ENCODE measurements at regions of chr15 and their contacts with region 1.

Region 1: DNA sequence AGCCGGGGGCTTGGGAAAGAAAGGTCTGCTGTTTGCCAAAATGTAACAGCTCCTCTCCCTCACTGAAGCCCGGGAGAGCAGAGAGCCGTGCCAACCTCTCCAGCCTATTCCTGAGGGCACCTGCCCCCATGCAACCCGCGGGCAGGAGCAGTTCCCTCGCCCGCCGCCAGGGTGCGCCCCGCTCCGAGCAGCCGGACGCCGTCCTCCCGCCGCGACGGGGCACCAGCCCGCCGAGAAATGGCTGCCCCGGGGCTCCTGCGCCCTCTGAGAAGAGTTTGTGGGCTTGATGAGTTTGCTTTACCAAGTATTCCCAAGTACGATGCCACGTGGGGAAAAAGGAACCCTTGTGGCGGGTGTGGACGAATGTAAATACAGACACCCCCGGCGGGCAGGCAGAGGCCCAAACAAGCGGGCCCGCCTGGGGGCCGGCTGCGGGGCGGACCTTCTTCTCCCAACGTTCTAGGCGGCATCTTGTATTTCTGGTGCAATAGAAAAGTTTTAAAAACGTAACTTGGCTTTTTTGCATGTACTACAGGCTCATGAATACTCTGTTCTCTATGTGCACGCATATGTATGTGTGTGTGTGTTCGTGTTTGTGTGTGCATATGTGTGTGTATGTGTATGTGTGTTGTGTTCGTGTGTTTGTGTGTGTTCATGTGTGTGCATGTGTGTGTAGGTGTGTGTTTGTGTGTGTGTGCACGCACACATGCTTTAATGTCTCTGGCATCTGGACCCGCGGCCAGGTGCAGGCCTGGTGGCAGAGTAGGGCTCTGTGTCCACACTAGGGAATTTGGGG is 162.9 kb downstream of the CHSY1 start:
- DNase-seq: peak in 1 of 2 donors; percentile 82
- ATAC-seq: peak; percentile 95

Region 2: GRCh38 chr15:101127506-101128076 is 38.6 kb after region 1 on chr15:
- intact Hi-C with region 1: no loop called
- DNase-seq: peak; percentile 52 to 62
- ATAC-seq: peak; percentile 34

Region 3: DNA sequence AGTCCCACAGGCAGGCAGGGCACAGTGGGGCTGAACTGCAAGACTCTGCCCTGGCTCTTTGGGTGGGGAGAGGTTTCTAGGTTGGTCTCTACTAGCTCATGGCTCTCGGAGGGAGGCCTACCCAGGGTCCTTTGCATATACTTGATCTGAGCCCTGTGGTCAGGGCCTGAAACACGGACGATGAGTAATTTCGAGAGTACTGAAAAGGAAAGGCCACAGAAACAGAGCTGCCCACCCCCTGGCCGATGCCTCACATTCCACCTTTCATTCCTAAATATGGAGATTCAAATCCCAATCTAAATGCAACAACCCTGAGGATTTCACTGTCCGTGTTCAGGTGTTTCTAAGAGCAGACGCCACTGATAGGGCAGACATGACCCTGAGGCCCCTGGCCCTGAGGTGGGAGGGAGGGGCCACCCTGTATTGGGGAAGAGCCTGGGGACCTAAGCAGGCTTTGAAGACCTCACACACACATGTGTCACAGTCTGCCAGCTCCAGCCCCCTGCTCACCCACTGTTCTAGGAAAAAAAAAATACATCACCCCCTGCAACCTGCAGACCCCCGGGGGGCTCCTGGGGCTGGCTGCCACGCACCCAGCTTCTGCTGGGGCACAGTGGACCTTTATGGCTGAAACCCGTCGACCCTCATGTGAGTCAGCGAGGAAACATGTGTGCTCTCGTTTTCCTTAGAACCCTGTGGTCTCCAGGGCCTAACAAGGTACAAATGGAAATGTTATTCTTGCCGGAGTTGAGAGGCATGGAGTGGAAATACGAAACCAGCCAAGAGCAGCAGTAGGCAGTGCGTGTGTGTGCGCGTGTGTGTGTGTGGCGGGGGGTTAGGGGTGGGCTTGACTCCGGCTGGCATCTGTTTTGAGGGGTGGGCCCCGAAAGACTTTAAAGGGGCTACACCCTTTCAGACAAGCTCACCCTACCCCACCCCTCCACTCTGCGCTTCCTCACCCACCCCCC is 50.2 kb after region 1 on chr15:
- intact Hi-C with region 1: no loop called
- DNase-seq: no peak
- ATAC-seq: no peak

Region 4: DNA sequence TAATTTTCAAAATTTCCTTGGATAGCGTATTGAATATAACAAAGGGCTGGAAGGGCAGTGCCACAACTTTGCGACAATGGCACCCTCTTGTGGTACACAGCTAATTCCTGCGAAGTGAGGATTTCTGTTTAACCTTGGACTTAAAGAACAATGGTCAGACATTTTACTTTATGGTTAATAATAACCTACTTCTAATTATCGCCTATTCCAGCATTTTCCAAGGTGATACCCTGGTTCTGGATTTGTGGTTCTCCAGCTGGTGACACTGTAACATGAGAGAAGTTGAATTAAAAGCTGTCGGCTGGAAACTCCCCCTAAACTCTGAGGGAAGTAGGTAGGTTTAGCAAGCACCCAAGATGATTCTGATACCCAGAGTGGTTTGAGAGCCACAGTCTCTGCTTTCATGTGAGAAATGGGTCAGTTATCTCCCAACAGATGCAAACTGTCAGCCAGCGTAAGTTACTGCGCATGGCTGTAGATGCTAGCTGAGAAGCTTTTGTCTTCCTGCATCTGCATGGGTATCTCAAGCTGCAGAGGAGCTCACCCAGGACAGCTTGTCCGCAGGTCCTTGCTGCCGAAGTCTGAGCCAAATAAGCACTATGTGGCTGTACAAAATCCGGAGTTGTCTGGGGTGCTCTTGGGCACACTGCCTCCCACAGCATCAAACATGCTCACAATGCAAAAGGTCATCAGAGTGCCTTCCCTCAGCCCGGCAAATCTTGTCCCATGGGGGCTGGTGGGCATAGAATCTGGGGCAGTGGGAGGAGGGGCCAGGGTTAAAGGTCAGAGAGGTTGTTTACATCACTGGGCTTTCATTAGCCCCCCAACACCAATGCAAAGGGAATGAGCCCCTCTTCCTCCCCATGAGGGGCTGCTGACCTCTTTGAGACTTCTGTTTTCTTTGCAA is 169.5 kb after region 1 on chr15:
- intact Hi-C with region 1: loop called (anchors 5 to 10 kb)
- DNase-seq: peak in 1 of 2 donors; percentile 60
- ATAC-seq: peak; percentile 88

Region 5: DNA sequence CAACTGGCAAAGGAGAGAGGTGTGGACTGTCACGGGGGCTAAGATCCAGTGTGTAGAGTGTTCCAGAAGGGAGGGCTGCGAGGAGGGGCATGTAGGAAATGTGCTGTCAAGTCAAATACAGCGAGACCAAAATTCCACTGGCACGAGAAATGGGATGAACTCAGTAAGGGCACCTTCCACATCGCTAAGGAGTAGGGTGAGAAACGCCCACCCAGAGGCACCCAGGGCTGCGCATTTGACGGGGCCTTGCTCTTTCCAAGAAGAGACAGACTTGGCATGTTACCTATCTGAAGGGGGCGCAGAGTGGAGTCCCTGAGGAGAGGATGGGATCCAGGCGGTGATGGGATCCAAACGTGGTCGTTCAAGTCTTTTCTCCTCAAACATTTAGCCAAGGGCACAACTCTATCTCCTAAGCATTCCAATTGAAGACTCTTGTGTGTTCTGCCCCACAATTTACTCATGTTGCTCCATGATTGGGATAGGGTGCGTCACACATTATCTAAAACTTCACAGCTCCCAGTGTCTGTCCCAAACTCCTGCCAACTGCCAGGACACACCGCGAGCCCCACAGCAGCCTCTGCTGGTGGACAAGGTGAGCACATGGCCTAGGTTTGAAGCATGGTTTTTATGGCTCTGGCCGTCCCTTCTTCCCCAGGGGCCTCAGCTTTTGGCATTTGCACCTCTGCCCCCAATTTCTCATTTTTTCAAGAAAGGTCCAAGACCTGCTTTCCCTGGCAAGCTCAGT is 180.7 kb after region 1 on chr15:
- intact Hi-C with region 1: loop called in 1 of 2 experiments (anchors 10 kb)
- DNase-seq: no peak
- ATAC-seq: peak; percentile 58